ENCODE measurements at regions of chr22 and their contacts with region 1.

Region 1: GRCh38 chr22:22156716-22157347 is 87.8 kb upstream of the VPREB1 start:
- DNase-seq: peak; percentile 94
- H3K4me3 ChIP-seq: peak overlapping the region; percentile 46
- H3K27ac ChIP-seq: peak overlapping the region; percentile 84
- H3K4me1 ChIP-seq: peaks cover 55% of the 10 kb centered on the region
- CTCF ChIP-seq: peak; percentile 96

Region 2: GRCh38 chr22:22025320-22026156 is 131.3 kb before region 1 on chr22:
- CTCF ChIA-PET with region 1: no interaction called
- POLR2A ChIA-PET with region 1: interaction called, 21 read pairs
- intact Hi-C with region 1: loop called (anchors 1 kb)
- DNase-seq: peak; percentile 88
- H3K4me3 ChIP-seq: peak overlapping the region; percentile 71
- H3K27ac ChIP-seq: peak overlapping the region; percentile 93
- H3K4me1 ChIP-seq: peaks cover 88% of the 10 kb centered on the region
- CTCF ChIP-seq: no peak

Region 3: GRCh38 chr22:22110548-22111266 is 46.1 kb before region 1 on chr22:
- CTCF ChIA-PET with region 1: interaction called, 3 read pairs
- POLR2A ChIA-PET with region 1: interaction called, 5 read pairs
- intact Hi-C with region 1: loop called (anchors 1 kb)
- DNase-seq: peak; percentile 95
- H3K4me3 ChIP-seq: peak overlapping the region; percentile 38
- H3K27ac ChIP-seq: peak overlapping the region; percentile 64
- H3K4me1 ChIP-seq: peaks cover 34% of the 10 kb centered on the region
- CTCF ChIP-seq: peak; percentile 89

Region 4: DNA sequence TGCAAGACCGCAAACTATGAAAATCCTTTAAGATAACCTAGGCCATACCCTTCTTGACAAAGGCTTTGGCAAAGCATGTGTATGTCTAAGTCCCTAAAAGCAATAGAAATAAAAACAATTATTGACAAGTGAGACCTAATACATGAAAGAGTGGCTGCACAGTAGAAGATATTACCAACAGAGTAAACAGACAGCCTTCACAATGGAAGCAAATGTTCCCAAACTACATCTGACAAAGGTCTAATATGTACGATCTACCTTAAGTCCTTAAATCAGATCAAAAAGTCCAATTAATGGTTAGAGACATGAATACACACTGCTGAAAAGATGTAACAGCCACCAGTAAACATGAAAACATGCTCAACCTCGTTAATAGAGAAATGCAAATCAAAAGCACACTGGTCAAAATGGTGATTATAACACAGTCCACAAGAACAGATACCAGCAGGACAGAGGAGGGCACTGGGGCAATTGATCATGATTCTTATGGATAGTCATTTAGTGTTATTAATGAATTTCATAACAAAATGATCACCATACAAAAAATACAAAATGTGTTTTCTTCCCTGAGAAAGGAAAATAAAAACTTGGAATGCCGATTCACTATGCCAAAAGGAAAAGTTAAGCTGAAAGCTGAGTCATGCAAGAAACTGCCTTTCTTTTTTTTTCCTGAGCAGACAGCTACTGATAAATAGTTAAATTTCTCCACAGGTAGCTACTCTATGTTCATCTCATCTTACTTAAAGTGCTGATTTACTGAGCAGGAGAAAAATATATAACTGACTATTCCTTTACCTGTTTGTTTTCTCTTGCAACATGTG is 14.9 kb before region 1 on chr22:
- CTCF ChIA-PET with region 1: no interaction called
- POLR2A ChIA-PET with region 1: interaction called, 4 read pairs
- intact Hi-C with region 1: loop called (anchors 1 kb)
- DNase-seq: no peak
- H3K4me3 ChIP-seq: no peak overlapping the region
- H3K27ac ChIP-seq: no peak overlapping the region
- H3K4me1 ChIP-seq: no peaks in the 10 kb centered on the region
- CTCF ChIP-seq: no peak

Region 5: GRCh38 chr22:22322792-22323191 is 166.0 kb after region 1 on chr22:
- CTCF ChIA-PET with region 1: no interaction called
- POLR2A ChIA-PET with region 1: interaction called, 3 read pairs
- intact Hi-C with region 1: loop called (anchors 2 kb)
- DNase-seq: no peak
- H3K4me3 ChIP-seq: no peak overlapping the region
- H3K27ac ChIP-seq: no peak overlapping the region
- H3K4me1 ChIP-seq: peaks cover 11% of the 10 kb centered on the region
- CTCF ChIP-seq: no peak

Measured in OCI-LY7 (cell line).